CD4-positive, alpha-beta T cell (primary cell): ENCODE measurements at regions of chr3 and their contacts with region 1.

Region 1: GRCh38 chr3:40309418-40309924 is at the start of gene EIF1B:
- DNase-seq: peak; percentile 96 to 99 (median 98)
- ATAC-seq: peak; percentile 89
- H3K4me3 ChIP-seq: peak within 1 kb of the TSS; percentile 93
- H3K4me3 Mint-ChIP-seq: peak within 1 kb of the TSS; percentile 100
- H3K27ac ChIP-seq: peak within 1 kb of the TSS; percentile 91 to 95
- H3K27ac Mint-ChIP-seq: peak within 1 kb of the TSS; percentile 100
- H3K4me1 ChIP-seq: peaks cover 11% of the 10 kb centered on the region
- H3K4me1 Mint-ChIP-seq: peaks cover 50% of the 10 kb centered on the region
- H3K27me3 ChIP-seq: no peaks in the 10 kb centered on the region
- H3K27me3 Mint-ChIP-seq: no peaks in the 10 kb centered on the region
- CTCF ChIP-seq: peak; percentile 90
- total RNA-seq, gene EIF1B: 112 to 120 TPM

Region 2: DNA sequence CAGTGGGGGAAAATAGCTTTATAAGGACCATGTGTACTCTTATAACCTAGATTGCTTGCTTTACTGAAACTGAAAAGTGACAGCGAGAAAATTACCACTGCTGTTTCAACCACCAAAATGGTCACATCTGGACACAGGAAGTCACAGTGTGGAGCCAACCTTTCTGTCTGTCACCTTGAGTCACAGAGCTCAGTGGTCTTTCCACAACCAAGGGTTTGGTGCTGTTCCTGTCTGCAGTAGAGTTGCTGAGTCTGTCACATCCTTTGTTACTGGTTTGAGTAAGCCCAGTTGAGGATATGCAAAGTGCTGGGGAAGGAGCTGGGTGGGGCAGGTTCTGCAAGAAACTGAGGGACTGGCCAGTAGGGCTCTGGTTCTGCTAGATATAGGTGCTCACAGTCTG is 139.1 kb before region 1 on chr3:
- CTCF ChIA-PET with region 1: no interaction called
- POLR2A ChIA-PET with region 1: no interaction called
- intact Hi-C with region 1: no loop called
- DNase-seq: no peak
- ATAC-seq: no peak
- H3K4me3 ChIP-seq: no peak overlapping the region
- H3K4me3 Mint-ChIP-seq: no peak overlapping the region
- H3K27ac ChIP-seq: no peak overlapping the region
- H3K27ac Mint-ChIP-seq: no peak overlapping the region
- H3K4me1 ChIP-seq: no peaks in the 10 kb centered on the region
- H3K4me1 Mint-ChIP-seq: no peaks in the 10 kb centered on the region
- H3K27me3 ChIP-seq: no peaks in the 10 kb centered on the region
- H3K27me3 Mint-ChIP-seq: no peaks in the 10 kb centered on the region
- CTCF ChIP-seq: no peak

Region 3: GRCh38 chr3:40476478-40477470 is 167.3 kb after region 1 on chr3 and contains the start of gene ZNF619:
- CTCF ChIA-PET with region 1: no interaction called
- POLR2A ChIA-PET with region 1: no interaction called
- intact Hi-C with region 1: loop called in 1 of 2 experiments (anchors 5 kb)
- DNase-seq: peak in 13 of 14 experiments; percentile 22 to 80 (median 46)
- ATAC-seq: peak; percentile 80
- H3K4me3 ChIP-seq: peak within 1 kb of the TSS; percentile 80
- H3K4me3 Mint-ChIP-seq: peak within 1 kb of the TSS; percentile 87
- H3K27ac ChIP-seq: peak within 1 kb of the TSS in 1 of 2 donors; percentile 61
- H3K27ac Mint-ChIP-seq: peak within 1 kb of the TSS; percentile 64
- H3K4me1 ChIP-seq: peaks cover 17% of the 10 kb centered on the region
- H3K4me1 Mint-ChIP-seq: peaks cover 24% of the 10 kb centered on the region
- H3K27me3 ChIP-seq: no peaks in the 10 kb centered on the region
- H3K27me3 Mint-ChIP-seq: no peaks in the 10 kb centered on the region
- CTCF ChIP-seq: no peak
- total RNA-seq, gene ZNF619: 2.6 to 2.9 TPM

Region 4: GRCh38 chr3:41961750-41962679 is 1652.5 kb after region 1 on chr3 and contains the start of gene ULK4:
- CTCF ChIA-PET with region 1: no interaction called
- POLR2A ChIA-PET with region 1: interaction called, 3 read pairs
- intact Hi-C with region 1: loop called in 1 of 2 experiments (anchors 2 kb)
- DNase-seq: peak; percentile 87 to 99 (median 92)
- ATAC-seq: peak; percentile 83
- H3K4me3 ChIP-seq: peak within 1 kb of the TSS; percentile 100
- H3K4me3 Mint-ChIP-seq: peak within 1 kb of the TSS; percentile 100
- H3K27ac ChIP-seq: peak within 1 kb of the TSS; percentile 86 to 97
- H3K27ac Mint-ChIP-seq: peak within 1 kb of the TSS; percentile 98
- H3K4me1 ChIP-seq: peaks cover 19% of the 10 kb centered on the region
- H3K4me1 Mint-ChIP-seq: peaks cover 26% of the 10 kb centered on the region
- H3K27me3 ChIP-seq: no peaks in the 10 kb centered on the region
- H3K27me3 Mint-ChIP-seq: no peaks in the 10 kb centered on the region
- CTCF ChIP-seq: no peak
- total RNA-seq, gene ULK4: 23.8 to 28.6 TPM

Region 5: GRCh38 chr3:42012935-42013690 is 1703.6 kb after region 1 on chr3:
- CTCF ChIA-PET with region 1: no interaction called
- POLR2A ChIA-PET with region 1: no interaction called
- intact Hi-C with region 1: loop called in 1 of 2 experiments (anchors 5 kb)
- DNase-seq: peak; percentile 45 to 90 (median 68)
- ATAC-seq: peak; percentile 73
- H3K4me3 ChIP-seq: peak overlapping the region; percentile 78
- H3K4me3 Mint-ChIP-seq: peak overlapping the region; percentile 95
- H3K27ac ChIP-seq: peak overlapping the region; percentile 72 to 96
- H3K27ac Mint-ChIP-seq: peak overlapping the region; percentile 93
- H3K4me1 ChIP-seq: peaks cover 32% of the 10 kb centered on the region
- H3K4me1 Mint-ChIP-seq: peaks cover 38% of the 10 kb centered on the region
- H3K27me3 ChIP-seq: no peaks in the 10 kb centered on the region
- H3K27me3 Mint-ChIP-seq: no peaks in the 10 kb centered on the region
- CTCF ChIP-seq: no peak